ENCODE measurements at regions of chr5 and their contacts with region 1.

Region 1: DNA sequence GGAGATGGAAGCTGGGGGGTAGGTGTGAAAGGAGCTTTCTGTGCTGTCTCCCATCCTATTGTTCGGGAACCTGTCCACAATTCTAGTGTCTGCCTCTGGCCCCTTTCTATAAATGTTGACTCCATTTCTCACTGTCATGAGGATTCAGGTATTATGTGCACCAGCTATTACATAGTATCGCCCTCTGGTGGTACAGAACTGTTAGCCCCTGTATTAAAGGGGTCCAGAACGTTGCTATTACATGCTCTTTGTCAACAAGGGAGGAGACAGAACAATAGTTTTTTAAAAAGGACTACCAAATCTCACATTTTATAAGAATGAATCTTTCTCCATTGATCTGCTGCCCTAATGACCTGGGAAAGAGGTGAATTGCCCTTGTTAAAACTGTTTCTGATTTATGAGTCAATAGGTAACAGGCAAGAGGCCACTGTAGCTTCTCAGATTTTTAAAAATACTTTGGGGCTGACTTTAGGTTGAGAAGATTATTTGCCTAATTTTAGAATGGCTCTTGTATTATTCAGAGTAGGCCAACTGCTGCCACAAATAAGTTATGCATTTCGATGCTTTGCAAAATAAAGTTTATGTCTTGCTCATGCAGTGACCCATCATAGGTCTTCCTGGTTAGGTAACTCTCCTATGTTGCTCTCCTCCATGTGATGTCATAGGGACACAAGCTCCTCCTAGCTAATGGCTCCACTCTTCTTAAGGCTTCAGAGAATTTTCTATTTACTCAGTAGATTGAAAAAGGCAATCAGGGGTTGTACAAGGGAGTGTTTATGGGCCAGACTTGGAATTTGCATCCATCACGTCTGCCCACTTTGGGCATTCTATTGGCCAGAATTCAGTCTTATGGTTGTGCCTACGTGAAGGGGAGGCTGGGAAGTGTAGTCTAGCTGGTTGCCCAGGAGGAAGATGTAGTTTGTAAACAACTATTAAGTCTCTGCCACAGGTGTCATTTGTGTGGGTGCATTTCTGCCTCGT is 20.8 kb downstream of the DCANP1 start:
- DNase-seq: peak; percentile 65
- ATAC-seq: peak; percentile 92
- H3K4me3 ChIP-seq: no peak overlapping the region
- H3K27ac ChIP-seq: no peak overlapping the region
- H3K4me1 ChIP-seq: peaks cover 9 to 23% of the 10 kb centered on the region in 2 experiments; a peak in 3 of 4 replicates
- H3K27me3 ChIP-seq: no peaks in the 10 kb centered on the region
- CTCF ChIP-seq: peak; percentile 66 to 92 (median 86); a peak in 5 of 6 replicates
- POLR2A ChIP-seq: no peak
- RAD21 ChIP-seq: peak; percentile 77

Region 2: DNA sequence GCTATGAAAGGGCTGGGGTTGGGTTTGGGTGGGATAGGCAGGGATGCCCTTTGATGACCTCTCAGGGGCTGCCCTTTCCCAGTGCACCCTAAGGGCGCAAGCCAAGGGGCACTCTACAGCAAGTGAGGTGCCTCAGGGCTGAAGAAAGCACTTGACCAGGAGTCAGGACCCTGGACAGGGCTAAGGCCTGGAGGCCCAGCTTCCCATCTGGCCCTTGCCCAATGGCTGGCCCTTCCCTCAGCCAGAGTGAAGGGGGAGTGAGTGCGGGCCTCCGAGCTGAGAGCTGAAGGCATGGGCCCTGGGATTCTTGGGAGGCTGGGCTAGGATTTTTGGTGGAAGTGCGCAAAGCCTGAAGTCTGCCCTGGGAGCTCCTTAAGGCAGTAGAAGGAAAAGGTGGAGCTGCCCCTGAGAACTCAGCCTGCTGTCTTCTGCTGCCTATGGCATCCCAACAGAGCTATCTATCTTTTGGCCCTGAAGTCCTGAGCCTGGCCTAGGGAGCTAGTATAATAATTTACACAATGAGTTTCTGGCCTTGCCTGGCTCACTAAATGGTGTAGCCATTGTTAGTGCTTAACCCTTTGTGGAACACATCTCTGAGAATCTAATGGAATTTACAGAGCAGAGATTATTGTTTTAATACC is 884.5 kb before region 1 on chr5:
- CTCF ChIA-PET with region 1: no interaction called
- POLR2A ChIA-PET with region 1: no interaction called
- RAD21 ChIA-PET with region 1: no interaction called
- intact Hi-C with region 1: no loop called
- DNase-seq: no peak
- ATAC-seq: no peak
- H3K4me3 ChIP-seq: no peak overlapping the region
- H3K27ac ChIP-seq: no peak overlapping the region
- H3K4me1 ChIP-seq: no peaks in the 10 kb centered on the region
- H3K27me3 ChIP-seq: no peaks in the 10 kb centered on the region
- CTCF ChIP-seq: no peak
- POLR2A ChIP-seq: no peak
- RAD21 ChIP-seq: no peak

Region 3: GRCh38 chr5:135239453-135240282 is 186.7 kb before region 1 on chr5:
- CTCF ChIA-PET with region 1: no interaction called
- POLR2A ChIA-PET with region 1: no interaction called
- RAD21 ChIA-PET with region 1: no interaction called
- intact Hi-C with region 1: no loop called
- DNase-seq: no peak
- ATAC-seq: no peak
- H3K4me3 ChIP-seq: no peak overlapping the region
- H3K27ac ChIP-seq: no peak overlapping the region
- H3K4me1 ChIP-seq: peaks cover 3 to 11% of the 10 kb centered on the region in 2 experiments; a peak in 2 of 4 replicates
- H3K27me3 ChIP-seq: no peaks in the 10 kb centered on the region
- CTCF ChIP-seq: no peak
- POLR2A ChIP-seq: no peak
- RAD21 ChIP-seq: no peak

Region 4: DNA sequence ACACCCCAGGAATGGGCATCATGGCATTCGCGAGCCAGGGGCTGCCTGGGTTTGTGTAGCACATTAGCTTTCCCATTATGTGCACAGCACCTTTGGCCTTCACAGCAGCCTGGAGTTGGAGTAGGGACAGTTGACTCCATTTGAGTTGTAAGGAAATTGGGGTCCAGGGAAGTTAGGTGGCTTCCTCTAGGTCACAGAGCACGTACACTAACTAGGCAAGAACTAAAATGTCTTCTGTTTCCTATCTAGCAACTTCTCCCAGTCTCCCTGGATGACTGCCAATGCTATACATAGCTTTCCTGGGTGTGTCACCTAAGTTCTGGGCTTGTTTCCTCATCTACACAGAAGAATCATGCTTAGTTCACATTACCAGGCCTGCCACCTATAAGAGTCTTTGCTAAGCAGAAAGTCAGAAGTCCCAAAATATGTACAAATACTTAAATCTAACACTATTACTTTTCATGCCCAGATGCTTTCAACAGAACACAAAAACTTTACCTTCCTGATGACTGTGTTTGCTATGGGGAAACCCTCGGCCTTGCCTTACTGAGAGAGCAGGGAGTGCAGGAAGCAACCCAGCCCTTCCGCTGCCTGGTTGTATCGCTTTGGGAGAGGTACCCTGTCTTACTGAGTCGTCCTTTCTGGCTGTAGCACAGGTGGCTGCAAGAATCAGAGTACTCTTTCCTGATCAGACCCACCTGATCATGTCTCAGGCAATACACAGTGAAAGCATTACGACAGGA is 39.3 kb before region 1 on chr5:
- CTCF ChIA-PET with region 1: no interaction called
- POLR2A ChIA-PET with region 1: no interaction called
- RAD21 ChIA-PET with region 1: no interaction called
- intact Hi-C with region 1: no loop called
- DNase-seq: peak; percentile 62
- ATAC-seq: peak; percentile 66
- H3K4me3 ChIP-seq: peak overlapping the region in 1 of 2 experiments; percentile 14; a peak in 1 of 4 replicates
- H3K27ac ChIP-seq: peak overlapping the region; percentile 42
- H3K4me1 ChIP-seq: peaks cover 18 to 32% of the 10 kb centered on the region in 2 experiments
- H3K27me3 ChIP-seq: no peaks in the 10 kb centered on the region
- CTCF ChIP-seq: no peak
- POLR2A ChIP-seq: no peak
- RAD21 ChIP-seq: no peak

Region 5: GRCh38 chr5:135437796-135438560 is 11.6 kb after region 1 on chr5:
- CTCF ChIA-PET with region 1: interaction called, 17 read pairs
- POLR2A ChIA-PET with region 1: interaction called, 4 read pairs
- RAD21 ChIA-PET with region 1: no interaction called
- intact Hi-C with region 1: no loop called
- DNase-seq: peak; percentile 44
- ATAC-seq: peak; percentile 79
- H3K4me3 ChIP-seq: no peak overlapping the region
- H3K27ac ChIP-seq: no peak overlapping the region
- H3K4me1 ChIP-seq: peaks cover 10 to 17% of the 10 kb centered on the region in 2 experiments; a peak in 3 of 4 replicates
- H3K27me3 ChIP-seq: no peaks in the 10 kb centered on the region
- CTCF ChIP-seq: 0 out of 6 replicates have a peak, but pooled peaks of 1 of the 3 experiments have one; percentile 17
- POLR2A ChIP-seq: no peak
- RAD21 ChIP-seq: no peak

Region 6: DNA sequence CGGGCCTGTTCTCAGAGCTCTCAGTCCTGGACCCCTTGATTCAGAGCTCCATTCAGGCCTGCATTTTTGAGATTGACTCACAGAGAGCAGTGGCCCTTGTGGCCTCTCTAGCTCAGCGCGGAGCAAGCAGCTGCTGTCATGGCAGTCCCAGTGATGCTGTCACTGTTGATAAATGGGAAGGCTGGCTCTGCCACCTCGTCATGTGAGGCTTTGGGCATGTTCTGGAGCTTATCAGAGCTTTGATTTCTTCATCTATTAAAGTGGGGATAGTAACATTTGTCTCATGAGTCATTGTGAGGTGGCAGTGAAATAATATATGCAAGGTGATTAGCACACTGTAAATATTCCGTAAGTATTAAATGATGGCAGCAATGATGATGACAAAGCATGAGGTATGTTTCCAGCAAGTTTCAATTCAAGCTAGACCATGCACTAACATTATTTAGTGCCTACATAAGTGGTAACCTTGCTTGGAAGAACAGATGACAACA is 278.8 kb after region 1 on chr5:
- CTCF ChIA-PET with region 1: no interaction called
- POLR2A ChIA-PET with region 1: no interaction called
- RAD21 ChIA-PET with region 1: no interaction called
- intact Hi-C with region 1: no loop called
- DNase-seq: no peak
- ATAC-seq: no peak
- H3K4me3 ChIP-seq: no peak overlapping the region
- H3K27ac ChIP-seq: no peak overlapping the region
- H3K4me1 ChIP-seq: peaks cover 0 to 5% of the 10 kb centered on the region in 2 experiments; a peak in 1 of 4 replicates
- H3K27me3 ChIP-seq: peaks cover 4% of the 10 kb centered on the region
- CTCF ChIP-seq: no peak
- POLR2A ChIP-seq: no peak
- RAD21 ChIP-seq: no peak